Right lobe of liver (tissue), 6 donors: ENCODE measurements at regions of chr17 and their contacts with region 1.

Region 1: DNA sequence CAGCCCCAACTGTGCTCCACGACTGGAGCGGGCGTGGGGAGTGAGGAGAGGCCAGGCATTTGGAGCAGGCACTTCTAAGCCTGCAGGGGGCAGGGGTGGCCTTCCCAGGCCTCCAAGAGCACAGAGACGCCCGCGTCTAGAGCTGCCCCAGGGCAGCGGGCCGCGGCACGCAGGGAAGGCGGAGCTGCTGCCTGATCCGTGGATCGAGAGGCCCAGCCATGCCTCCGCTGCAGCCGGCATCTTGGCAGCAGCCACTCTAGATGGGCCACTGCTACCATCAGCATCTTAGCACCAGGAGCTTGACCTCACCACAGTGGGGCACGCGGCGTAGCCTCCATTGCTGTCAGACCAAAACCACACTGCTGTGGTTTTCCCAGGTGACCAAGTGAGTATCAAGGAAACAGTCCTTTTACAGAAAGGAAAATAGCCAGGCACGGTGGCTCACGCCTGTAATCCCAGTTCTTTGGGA is 20.4 kb upstream of the WDR45B start:
- DNase-seq: peak; percentile 77 to 83 (median 78)
- ATAC-seq: peak; percentile 95 to 98 (median 96)
- H3K4me3 ChIP-seq: no peak overlapping the region
- H3K27ac ChIP-seq: no peak overlapping the region
- H3K4me1 ChIP-seq: no peaks in the 10 kb centered on the region
- H3K27me3 ChIP-seq: no peaks in the 10 kb centered on the region
- CTCF ChIP-seq: peak; percentile 62 to 88 (median 72)
- POLR2A ChIP-seq: no peak

Region 2: GRCh38 chr17:82751571-82752370 is 83.1 kb after region 1 on chr17 and contains the start of gene TBCD:
- intact Hi-C with region 1: loop called in 1 of 2 experiments (anchors 10 kb)
- DNase-seq: peak; percentile 93 to 94 (median 93)
- ATAC-seq: peak; percentile 86 to 94 (median 91)
- H3K4me3 ChIP-seq: peak within 1 kb of the TSS; percentile 86 to 96 (median 89)
- H3K27ac ChIP-seq: peak within 1 kb of the TSS in 2 of 3 donors; percentile 61 to 62
- H3K4me1 ChIP-seq: peaks cover 0 to 7% (median 0%) of the 10 kb centered on the region in 4 donors
- H3K27me3 ChIP-seq: no peaks in the 10 kb centered on the region
- CTCF ChIP-seq: no peak
- POLR2A ChIP-seq: no peak
- total RNA-seq, gene TBCD: 28.0 to 55.7 (median 41.3) TPM